ENCODE measurements at regions of chr6 and their contacts with region 1.

Region 1: GRCh38 chr6:14046476-14047068 is 71.0 kb upstream of the CD83 start:
- DNase-seq: peak; percentile 79

Region 2: DNA sequence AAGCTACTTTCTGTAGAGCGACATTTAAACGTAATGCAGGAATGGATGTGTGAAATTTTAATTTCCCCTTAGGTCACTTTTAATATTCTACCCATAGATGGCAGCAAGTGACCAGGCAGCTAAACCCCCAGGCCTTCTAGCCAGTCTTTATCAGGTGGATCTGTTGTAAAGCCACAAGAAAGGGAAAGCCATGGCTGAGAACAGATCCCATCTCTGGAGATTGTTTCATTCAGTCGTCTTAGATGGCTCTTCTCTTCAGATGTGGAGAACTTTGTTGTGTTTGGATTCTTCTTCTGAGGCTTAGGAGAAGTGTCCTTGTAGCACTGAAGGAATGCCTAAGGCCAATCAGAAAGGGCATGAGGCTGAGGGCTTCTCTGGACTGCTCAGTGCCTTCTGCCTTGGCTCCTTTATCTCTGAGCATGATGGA is 137.6 kb before region 1 on chr6:
- CTCF ChIA-PET with region 1: interaction called, 14 read pairs
- POLR2A ChIA-PET with region 1: no interaction called
- DNase-seq: peak; percentile 74

Region 3: DNA sequence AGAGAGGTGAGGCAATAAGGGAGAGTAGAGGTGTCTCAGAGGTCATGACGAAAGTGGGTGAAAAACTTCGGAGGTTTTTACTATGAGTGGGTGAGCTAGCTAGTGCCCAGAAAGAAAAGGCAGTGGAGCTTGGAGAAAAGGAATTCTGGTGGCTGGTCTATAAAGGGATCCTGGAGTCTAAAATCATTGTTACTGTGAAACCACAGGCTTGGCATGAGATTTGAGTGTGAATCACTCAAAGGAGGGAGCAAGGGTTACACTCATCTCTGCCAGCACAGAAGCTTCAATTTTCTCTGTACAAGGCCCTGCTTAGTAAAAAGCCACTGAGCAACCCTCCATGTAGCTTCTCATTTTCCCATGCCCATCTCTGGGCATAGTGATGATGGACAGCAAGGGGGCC is 118.5 kb after region 1 on chr6:
- CTCF ChIA-PET with region 1: no interaction called
- POLR2A ChIA-PET with region 1: no interaction called
- DNase-seq: no peak

Region 4: DNA sequence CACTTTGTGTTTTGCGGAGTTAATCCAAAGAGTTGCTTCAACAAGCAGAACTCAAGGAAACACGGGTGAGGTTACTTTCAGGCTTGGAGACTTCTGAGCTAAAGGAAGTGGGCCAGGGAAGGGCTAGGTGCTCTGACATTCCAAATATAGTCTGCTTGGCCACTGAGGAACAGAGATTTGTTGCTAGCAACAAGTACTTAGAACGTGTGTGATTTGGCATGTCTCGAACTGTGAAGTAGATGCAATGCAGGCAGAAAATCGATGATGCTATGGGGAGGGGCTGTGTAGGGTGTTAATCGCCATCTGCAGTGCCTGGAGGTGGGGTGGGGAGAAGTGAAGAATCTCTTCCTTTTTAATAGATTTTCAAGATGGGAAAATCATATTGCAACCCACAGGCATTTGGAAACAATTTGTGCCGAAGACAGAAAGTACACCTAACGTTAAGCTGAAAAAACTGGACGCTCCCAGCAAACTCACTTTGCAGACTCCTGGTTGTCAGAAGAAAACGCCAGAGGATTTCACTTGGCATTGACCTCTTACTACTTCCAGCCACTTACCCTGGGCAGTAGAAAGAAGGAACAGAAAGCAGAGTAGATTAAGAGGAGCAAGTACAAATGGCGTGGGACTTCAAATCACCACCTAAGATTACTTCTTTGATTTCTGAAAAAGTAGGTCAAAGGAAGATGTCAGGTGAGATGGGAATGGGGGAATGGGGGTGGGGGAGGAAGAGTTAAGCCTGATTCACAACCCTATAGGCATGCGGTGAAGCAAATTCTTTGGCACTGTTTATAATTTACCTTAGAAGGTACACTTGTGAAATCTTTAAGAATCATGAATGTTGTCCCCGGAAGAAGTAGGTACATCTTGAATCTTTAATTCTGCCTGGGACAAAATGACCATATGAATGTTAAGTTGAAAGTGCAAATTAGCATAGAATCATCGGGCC is 385.1 kb after region 1 on chr6:
- CTCF ChIA-PET with region 1: no interaction called
- POLR2A ChIA-PET with region 1: no interaction called
- DNase-seq: no peak

Measured in HEK293T (cell line).